ENCODE measurements at regions of chr14 and their contacts with region 1.

Region 1: DNA sequence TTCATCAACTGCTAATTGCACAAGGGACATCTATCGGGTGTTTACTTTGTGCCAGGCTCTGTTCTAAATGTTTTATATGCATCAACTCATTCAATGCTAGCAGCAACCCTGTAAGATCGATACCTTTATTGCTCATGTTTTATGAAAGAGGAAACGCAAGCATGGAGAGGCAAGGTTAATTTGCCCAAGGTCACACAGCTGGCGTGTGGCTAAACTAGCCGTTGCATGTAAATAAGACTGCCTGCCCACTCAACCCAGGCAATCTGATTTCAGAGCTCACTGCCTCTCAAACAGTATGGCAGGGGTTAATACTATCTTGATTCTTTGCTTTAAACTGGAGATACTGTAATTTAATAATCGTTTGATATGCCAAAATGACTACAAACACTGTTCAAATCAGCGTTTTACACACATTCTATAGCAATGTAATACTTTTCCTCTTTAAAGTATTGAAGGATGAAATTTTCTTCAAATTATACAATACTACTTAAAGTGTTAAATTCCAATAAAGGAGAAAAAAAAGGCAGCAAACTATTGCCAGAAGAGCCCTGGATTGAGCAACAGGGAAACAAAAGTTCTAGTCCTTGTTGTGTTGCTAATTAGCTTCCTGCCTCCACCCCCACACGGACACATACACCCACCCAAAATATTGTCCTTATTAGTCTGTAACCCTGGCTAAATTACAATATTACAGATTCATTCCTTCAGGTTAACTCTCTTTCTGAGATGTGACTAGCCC is 39.1 kb upstream of the DHRS7 start:
- DNase-seq: no peak
- H3K4me3 ChIP-seq: no peak overlapping the region
- H3K27ac ChIP-seq: no peak overlapping the region
- H3K4me1 ChIP-seq: no peaks in the 10 kb centered on the region
- H3K27me3 ChIP-seq: no peaks in the 10 kb centered on the region
- CTCF ChIP-seq: no peak

Region 2: DNA sequence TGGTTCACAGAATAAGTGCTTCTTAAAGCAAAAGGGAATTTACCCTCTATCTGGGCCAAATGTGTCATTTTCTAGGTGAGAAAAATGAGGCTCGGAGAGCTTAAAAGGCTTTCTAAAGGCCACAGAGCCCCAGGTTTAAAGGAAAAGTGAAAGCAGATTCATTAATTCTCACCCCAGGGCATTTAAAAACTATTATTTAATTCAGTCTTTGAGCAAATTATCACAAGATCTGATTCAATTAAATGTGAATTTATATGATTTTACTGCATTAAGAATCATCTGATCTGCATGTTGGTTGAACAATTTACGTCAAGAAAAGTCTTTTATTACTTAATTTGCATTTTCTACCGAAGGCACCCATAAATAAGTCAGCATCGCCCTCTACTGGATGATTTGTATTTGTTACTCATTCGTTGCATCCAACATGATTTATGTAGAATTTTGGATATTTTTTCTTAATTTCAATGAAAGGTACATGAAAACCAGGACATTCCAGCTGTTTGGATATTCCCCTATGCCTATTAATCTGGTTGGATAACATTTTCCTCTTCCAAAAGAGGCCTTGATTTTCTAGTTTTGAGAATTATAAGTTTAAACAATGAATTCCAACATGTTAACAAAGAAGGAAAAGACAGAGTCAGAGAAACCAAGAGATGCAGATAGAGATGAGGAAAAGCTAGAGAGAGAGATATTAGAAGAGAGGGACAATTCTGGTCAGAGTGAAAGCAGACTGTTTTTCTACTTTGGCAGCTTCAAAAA is 19.9 kb before region 1 on chr14:
- CTCF ChIA-PET with region 1: no interaction called
- POLR2A ChIA-PET with region 1: no interaction called
- intact Hi-C with region 1: no loop called
- DNase-seq: peak; percentile 81
- H3K4me3 ChIP-seq: peak overlapping the region; percentile 34
- H3K27ac ChIP-seq: no peak overlapping the region
- H3K4me1 ChIP-seq: peaks cover 11% of the 10 kb centered on the region
- H3K27me3 ChIP-seq: no peaks in the 10 kb centered on the region
- CTCF ChIP-seq: peak; percentile 84

Region 3: GRCh38 chr14:60248697-60249318 is 44.5 kb after region 1 on chr14 and contains the start of gene PPM1A:
- CTCF ChIA-PET with region 1: no interaction called
- POLR2A ChIA-PET with region 1: interaction called, 19 read pairs
- intact Hi-C with region 1: no loop called
- DNase-seq: peak; percentile 96
- H3K4me3 ChIP-seq: peak within 1 kb of the TSS; percentile 81
- H3K27ac ChIP-seq: peak within 1 kb of the TSS; percentile 98
- H3K4me1 ChIP-seq: peaks cover 19% of the 10 kb centered on the region
- H3K27me3 ChIP-seq: no peaks in the 10 kb centered on the region
- CTCF ChIP-seq: no peak
- total RNA-seq, gene PPM1A: 52.3 and 54.5 TPM in 2 replicates

Region 4: DNA sequence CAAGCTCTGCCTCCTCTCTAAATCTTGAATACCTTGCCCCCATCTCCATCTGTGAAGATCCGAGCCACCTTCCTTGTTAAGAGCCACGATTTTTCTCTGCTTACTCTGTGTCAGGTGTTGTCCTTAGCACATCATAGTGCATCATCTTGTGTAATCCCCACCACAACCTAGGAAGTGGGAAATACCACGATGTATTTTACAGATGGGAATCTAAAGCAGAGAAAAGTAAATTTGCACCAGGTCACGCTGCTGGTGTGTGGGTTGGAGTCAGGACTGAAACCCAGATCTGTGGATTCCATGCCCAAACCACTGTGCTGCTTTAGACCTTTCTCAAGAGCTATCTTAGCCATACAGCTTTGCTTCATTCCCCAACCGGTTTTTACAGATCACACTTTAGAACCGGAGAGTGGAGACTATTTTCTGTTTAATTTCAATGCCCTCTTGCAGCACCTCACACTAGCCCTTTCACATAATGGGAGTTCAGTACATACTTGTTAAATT is 139.3 kb after region 1 on chr14:
- CTCF ChIA-PET with region 1: no interaction called
- POLR2A ChIA-PET with region 1: no interaction called
- intact Hi-C with region 1: loop called (anchors 5 kb)
- DNase-seq: no peak
- H3K4me3 ChIP-seq: no peak overlapping the region
- H3K27ac ChIP-seq: no peak overlapping the region
- H3K4me1 ChIP-seq: no peaks in the 10 kb centered on the region
- H3K27me3 ChIP-seq: no peaks in the 10 kb centered on the region
- CTCF ChIP-seq: no peak

Measured in A673 (cell line).